ENCODE measurements at regions of chr19 and their contacts with region 1.

Region 1: DNA sequence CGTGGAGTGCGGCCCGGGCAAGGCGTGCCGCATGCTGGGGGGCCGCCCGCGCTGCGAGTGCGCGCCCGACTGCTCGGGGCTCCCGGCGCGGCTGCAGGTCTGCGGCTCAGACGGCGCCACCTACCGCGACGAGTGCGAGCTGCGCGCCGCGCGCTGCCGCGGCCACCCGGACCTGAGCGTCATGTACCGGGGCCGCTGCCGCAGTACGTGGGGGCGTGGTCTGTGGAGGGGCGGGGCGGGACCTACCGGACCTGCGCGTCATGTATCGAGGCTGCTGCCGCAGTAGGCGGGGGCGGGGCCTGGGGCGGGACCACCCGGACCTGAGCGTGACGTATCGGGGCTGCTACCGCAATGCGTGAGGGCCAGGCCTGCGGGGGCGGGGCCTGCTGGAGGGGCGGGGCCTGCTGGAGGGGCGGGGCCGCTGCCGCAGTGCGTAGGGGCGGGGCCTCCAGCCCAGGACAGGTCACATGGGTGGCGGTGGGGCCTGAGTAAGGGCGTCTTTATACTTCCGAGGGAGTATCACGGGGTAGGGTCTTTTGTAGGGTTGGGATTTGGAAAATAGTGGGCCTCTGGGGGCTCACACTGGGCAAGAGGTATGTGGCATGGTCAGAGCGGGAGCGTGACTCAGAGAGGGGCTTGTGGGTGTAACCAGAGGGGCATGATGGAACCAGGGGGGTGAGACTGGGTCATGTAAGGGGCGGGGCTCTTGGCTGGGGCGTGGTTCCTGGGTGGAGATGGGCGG is 4.3 kb downstream of the FSTL3 start:
- DNase-seq: peak; percentile 97
- H3K4me3 Mint-ChIP-seq: peak overlapping the region; percentile 65
- H3K27ac Mint-ChIP-seq: peak overlapping the region; percentile 63
- H3K4me1 Mint-ChIP-seq: peaks cover 9% of the 10 kb centered on the region
- H3K27me3 Mint-ChIP-seq: no peaks in the 10 kb centered on the region
- CTCF ChIP-seq: peak; percentile 45

Region 2: DNA sequence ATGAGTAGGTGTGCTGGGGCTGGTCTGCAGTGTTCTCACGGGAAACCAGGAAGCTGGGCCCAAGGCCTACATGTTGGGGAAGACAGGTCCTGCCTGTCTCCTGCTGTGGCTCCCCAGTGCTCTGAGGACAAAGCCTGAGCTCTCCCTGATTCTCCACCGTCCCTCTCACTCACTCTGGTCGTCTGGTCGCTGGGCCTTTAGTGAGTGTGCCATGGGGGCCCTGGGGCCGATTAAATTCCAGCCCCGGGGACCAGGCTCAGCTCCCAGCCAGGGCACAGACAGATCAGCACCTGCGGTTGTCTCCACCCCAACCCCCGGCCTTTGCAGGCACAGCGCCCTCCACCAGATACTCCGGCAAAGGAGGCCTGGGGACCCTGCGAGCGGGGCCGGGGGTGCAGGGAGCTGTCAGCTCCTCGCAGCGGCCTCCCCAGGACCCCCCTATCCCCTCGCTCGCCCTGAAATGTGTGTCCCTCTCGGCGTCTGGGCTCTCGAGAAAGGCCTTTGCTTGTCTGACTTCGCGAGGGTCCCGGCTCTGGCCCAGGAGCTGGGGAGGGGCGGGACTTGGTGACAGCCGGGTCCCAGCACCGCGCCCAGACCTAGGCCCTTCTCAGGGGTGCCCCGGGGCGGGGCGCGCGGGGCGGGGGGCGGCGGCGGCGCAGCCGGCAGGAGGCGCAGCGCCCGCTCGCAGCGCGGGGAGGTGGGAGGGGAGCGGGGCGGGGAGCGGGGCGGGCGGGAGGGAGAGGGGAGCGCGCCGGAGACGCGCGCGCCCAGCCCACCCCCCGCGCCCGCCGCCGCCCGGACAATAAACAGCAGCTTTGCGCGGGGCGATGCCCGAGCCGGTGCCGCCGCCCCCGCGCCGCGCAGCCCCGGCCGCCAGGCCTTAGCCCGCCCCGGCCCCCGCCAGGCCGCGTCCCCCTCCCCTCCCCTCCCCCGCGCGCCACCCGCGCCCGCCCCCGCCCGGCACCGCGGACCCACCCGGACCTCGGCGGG is 28.0 kb after region 1 on chr19 and contains the start of gene PALM:
- CTCF ChIA-PET with region 1: interaction called, 4 read pairs
- POLR2A ChIA-PET with region 1: interaction called, 10 read pairs
- intact Hi-C with region 1: no loop called
- DNase-seq: no peak
- H3K4me3 Mint-ChIP-seq: no peak within 1 kb of the TSS
- H3K27ac Mint-ChIP-seq: no peak within 1 kb of the TSS
- H3K4me1 Mint-ChIP-seq: no peaks in the 10 kb centered on the region
- H3K27me3 Mint-ChIP-seq: no peaks in the 10 kb centered on the region
- CTCF ChIP-seq: no peak
- total RNA-seq, gene PALM: 0.44 TPM in 1 of 2 replicates, not detected in the other

Region 3: GRCh38 chr19:752652-753517 is 72.4 kb after region 1 on chr19:
- CTCF ChIA-PET with region 1: no interaction called
- POLR2A ChIA-PET with region 1: interaction called, 18 read pairs
- intact Hi-C with region 1: loop called (anchors 5 kb)
- DNase-seq: peak; percentile 73
- H3K4me3 Mint-ChIP-seq: peak overlapping the region; percentile 25
- H3K27ac Mint-ChIP-seq: no peak overlapping the region
- H3K4me1 Mint-ChIP-seq: peaks cover 12% of the 10 kb centered on the region
- H3K27me3 Mint-ChIP-seq: no peaks in the 10 kb centered on the region
- CTCF ChIP-seq: no peak